B cell (primary cell): ENCODE measurements at regions of chrX and their contacts with region 1.

Region 1: DNA sequence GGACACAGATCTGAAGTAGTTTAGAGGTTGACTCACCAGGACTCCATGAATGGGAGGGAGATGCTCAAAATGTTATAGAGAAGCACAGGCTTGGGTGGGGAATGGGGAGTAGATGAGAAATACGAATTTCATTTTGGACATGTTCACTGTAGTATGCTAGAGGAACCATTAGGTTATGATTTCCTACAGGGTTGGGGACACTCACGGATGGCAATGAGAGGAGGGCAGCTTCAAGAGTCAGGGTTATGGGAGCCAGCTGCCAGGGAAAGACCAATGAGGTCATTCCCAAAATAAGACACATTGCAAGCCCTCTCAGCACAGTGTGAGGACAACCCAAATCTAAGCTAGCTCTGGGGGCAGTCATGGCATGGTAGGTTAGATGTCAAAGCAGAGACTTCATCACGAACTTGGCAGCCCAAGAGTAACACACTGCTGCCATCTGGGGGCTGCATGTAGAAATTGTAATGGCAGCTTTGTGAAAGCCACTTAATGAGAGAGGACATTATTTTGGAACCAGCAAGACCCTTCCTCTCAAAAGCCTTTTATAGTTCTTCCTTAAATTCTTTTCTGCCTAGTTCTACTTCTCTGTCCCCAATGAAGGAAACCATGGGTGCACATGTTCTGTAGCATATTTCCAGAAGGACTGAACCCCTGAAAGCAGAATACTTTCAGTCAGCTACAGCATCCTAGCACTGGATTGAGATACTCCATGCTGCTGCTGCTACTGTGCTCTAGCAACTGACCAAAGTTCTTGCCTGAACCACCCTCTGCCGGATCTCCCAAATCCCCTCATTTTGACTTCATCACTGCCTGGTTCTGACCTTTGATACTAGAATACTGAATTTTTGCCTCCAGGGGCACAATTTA is 16.2 kb upstream of the ZCCHC12 start:
- DNase-seq: peak; percentile 69
- ATAC-seq: peak; percentile 58
- H3K4me3 ChIP-seq: no peak overlapping the region
- H3K4me3 Mint-ChIP-seq: no peak overlapping the region
- H3K27ac ChIP-seq: no peak overlapping the region
- H3K27ac Mint-ChIP-seq: no peak overlapping the region
- H3K4me1 ChIP-seq: no peaks in the 10 kb centered on the region
- H3K4me1 Mint-ChIP-seq: peaks cover 4% of the 10 kb centered on the region
- H3K27me3 ChIP-seq: no peaks in the 10 kb centered on the region
- H3K27me3 Mint-ChIP-seq: peaks cover 3% of the 10 kb centered on the region
- CTCF ChIP-seq: peak; percentile 73

Region 2: DNA sequence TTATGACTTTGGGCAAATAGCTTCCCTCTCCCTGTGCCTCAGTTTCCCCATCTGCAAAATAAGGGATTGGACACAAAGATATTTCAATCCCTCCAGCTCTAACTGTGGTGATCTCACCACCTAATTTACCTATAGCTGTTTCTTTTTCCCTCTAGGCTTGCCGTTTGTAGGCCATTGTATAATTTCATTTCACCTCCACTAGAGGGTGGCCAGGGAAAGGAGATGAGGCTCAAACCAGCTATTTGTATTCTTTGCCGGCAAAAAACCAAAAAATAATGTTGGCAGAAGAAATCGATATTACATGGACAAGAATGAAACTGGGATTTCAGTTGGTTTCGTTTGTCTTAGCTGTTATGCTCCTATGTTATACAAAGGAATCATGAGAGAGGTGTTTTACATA is 347.9 kb before region 1 on chrX:
- CTCF ChIA-PET with region 1: interaction called, 7 read pairs
- POLR2A ChIA-PET with region 1: no interaction called
- intact Hi-C with region 1: loop called (anchors 5 kb)
- DNase-seq: peak; percentile 50
- ATAC-seq: no peak
- H3K4me3 ChIP-seq: no peak overlapping the region
- H3K4me3 Mint-ChIP-seq: no peak overlapping the region
- H3K27ac ChIP-seq: no peak overlapping the region
- H3K27ac Mint-ChIP-seq: no peak overlapping the region
- H3K4me1 ChIP-seq: no peaks in the 10 kb centered on the region
- H3K4me1 Mint-ChIP-seq: no peaks in the 10 kb centered on the region
- H3K27me3 ChIP-seq: no peaks in the 10 kb centered on the region
- H3K27me3 Mint-ChIP-seq: peaks cover 3% of the 10 kb centered on the region
- CTCF ChIP-seq: peak; percentile 64

Region 3: GRCh38 chrX:118603981-118604380 is 203.4 kb before region 1 on chrX:
- CTCF ChIA-PET with region 1: interaction called, 53 read pairs
- POLR2A ChIA-PET with region 1: no interaction called
- intact Hi-C with region 1: loop called (anchors 1 kb)
- DNase-seq: peak; percentile 61
- ATAC-seq: peak; percentile 51
- H3K4me3 ChIP-seq: no peak overlapping the region
- H3K4me3 Mint-ChIP-seq: no peak overlapping the region
- H3K27ac ChIP-seq: no peak overlapping the region
- H3K27ac Mint-ChIP-seq: peak overlapping the region; percentile 75
- H3K4me1 ChIP-seq: no peaks in the 10 kb centered on the region
- H3K4me1 Mint-ChIP-seq: peaks cover 4% of the 10 kb centered on the region
- H3K27me3 ChIP-seq: no peaks in the 10 kb centered on the region
- H3K27me3 Mint-ChIP-seq: no peaks in the 10 kb centered on the region
- CTCF ChIP-seq: peak; percentile 75

Region 4: DNA sequence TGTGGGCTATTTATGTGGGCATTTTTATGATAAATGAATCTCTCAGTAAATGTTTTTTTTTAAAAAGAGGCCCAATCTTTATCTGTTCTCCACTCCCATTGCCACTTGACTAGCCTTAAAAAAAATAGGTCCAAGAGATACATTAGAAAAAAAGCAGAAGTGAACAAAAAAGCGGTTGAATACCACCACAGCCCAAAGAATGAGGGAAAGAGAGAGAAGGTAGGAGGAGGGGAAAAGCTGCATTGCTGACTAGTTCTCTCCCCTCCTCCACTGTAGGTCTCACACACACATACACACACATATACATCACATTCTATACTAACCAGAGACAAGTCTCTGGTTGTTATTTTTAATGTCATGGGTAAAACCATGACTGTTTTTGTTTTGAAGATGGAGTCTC is 175.8 kb before region 1 on chrX:
- CTCF ChIA-PET with region 1: interaction called, 15 read pairs
- POLR2A ChIA-PET with region 1: interaction called, 3 read pairs
- intact Hi-C with region 1: loop called (anchors 5 kb)
- DNase-seq: peak; percentile 60
- ATAC-seq: peak; percentile 70
- H3K4me3 ChIP-seq: no peak overlapping the region
- H3K4me3 Mint-ChIP-seq: no peak overlapping the region
- H3K27ac ChIP-seq: peak overlapping the region in 1 of 2 donors; percentile 34
- H3K27ac Mint-ChIP-seq: peak overlapping the region; percentile 82
- H3K4me1 ChIP-seq: peaks cover 16 to 17% of the 10 kb centered on the region in 2 donors
- H3K4me1 Mint-ChIP-seq: peaks cover 29% of the 10 kb centered on the region
- H3K27me3 ChIP-seq: no peaks in the 10 kb centered on the region
- H3K27me3 Mint-ChIP-seq: no peaks in the 10 kb centered on the region
- CTCF ChIP-seq: no peak

Region 5: DNA sequence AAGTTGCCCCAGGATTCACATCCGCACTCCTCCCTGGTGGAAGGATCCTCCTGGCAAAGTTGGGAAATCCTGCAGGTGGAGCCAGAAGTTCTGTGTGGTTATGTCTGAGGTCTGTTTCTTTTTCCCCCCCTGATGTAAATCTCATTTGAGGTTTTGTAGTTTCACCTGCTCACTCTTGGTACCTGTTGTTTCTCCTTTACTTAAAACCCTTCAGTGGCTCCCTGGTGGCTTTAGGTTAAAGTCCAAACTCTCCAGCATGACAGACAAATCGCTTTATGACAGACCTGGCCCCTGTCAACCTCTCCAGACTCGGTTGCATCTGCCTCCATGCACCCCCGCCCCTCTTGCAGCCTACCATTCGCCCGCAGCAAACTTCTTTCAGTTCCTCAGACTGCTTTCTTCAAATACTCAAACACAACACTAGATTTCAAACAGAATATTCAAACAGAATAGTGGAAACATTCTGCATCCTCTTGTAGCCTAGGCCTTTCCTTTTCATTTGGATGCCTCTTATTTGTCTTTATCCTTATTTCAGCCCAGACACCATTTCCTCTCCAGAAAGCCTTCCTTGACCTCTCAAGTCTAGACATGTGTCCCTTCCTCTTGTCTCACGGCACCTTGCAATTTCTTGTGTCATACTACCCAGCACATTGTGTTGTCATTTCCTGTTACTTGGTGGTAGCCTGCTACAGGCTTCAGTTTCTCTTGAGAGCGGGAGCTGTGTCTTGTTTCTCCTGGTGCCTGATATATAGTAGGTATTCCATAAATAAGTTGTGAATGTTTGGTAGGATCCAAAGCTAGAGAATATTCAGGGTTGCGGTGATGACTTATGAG is 55.2 kb before region 1 on chrX:
- CTCF ChIA-PET with region 1: interaction called, 5 read pairs
- POLR2A ChIA-PET with region 1: no interaction called
- intact Hi-C with region 1: loop called (anchors 10 kb)
- DNase-seq: peak; percentile 70
- ATAC-seq: peak; percentile 80
- H3K4me3 ChIP-seq: peak overlapping the region in 2 of 5 experiments; percentile 5 to 22
- H3K4me3 Mint-ChIP-seq: peak overlapping the region; percentile 70
- H3K27ac ChIP-seq: peak overlapping the region; percentile 68 to 87
- H3K27ac Mint-ChIP-seq: peak overlapping the region; percentile 92
- H3K4me1 ChIP-seq: peaks cover 22 to 24% of the 10 kb centered on the region in 2 donors
- H3K4me1 Mint-ChIP-seq: peaks cover 27% of the 10 kb centered on the region
- H3K27me3 ChIP-seq: no peaks in the 10 kb centered on the region
- H3K27me3 Mint-ChIP-seq: no peaks in the 10 kb centered on the region
- CTCF ChIP-seq: no peak

Region 6: GRCh38 chrX:118893923-118894322 is 86.5 kb after region 1 on chrX:
- CTCF ChIA-PET with region 1: no interaction called
- POLR2A ChIA-PET with region 1: no interaction called
- intact Hi-C with region 1: no loop called
- DNase-seq: no peak
- ATAC-seq: no peak
- H3K4me3 ChIP-seq: no peak overlapping the region
- H3K4me3 Mint-ChIP-seq: no peak overlapping the region
- H3K27ac ChIP-seq: no peak overlapping the region
- H3K27ac Mint-ChIP-seq: no peak overlapping the region
- H3K4me1 ChIP-seq: no peaks in the 10 kb centered on the region
- H3K4me1 Mint-ChIP-seq: peaks cover 5% of the 10 kb centered on the region
- H3K27me3 ChIP-seq: no peaks in the 10 kb centered on the region
- H3K27me3 Mint-ChIP-seq: no peaks in the 10 kb centered on the region
- CTCF ChIP-seq: no peak

Region 7: DNA sequence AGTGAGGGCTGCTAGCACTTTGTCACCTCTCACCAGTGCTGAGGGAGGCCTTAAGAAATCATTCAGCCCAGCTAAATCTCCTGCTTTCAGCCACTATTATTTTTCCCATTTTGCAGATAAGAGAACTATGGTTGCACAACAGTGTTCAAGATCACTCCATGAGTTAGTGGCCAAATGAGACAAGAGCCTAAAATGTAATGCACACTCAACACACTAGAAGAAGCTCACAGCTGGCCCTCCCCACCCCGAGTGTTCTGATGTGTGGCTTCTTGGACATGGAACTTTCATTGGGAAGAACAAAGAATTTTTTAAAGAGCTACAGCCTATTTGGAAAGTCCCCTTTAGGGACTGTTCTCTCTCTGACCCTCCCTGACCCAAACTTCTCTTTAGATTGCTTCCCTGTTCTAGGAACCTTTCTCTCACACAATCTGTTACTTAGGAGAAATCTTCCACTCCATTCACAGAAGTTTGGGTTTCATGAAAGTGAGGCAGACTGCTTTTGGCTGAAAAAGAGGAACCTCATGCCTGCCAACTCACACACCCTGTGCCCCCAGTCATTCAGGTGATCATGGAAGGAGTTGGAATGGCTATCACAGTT is 221.4 kb after region 1 on chrX:
- CTCF ChIA-PET with region 1: no interaction called
- POLR2A ChIA-PET with region 1: no interaction called
- intact Hi-C with region 1: no loop called
- DNase-seq: no peak
- ATAC-seq: no peak
- H3K4me3 ChIP-seq: no peak overlapping the region
- H3K4me3 Mint-ChIP-seq: no peak overlapping the region
- H3K27ac ChIP-seq: no peak overlapping the region
- H3K27ac Mint-ChIP-seq: no peak overlapping the region
- H3K4me1 ChIP-seq: no peaks in the 10 kb centered on the region
- H3K4me1 Mint-ChIP-seq: no peaks in the 10 kb centered on the region
- H3K27me3 ChIP-seq: no peaks in the 10 kb centered on the region
- H3K27me3 Mint-ChIP-seq: peaks cover 7% of the 10 kb centered on the region
- CTCF ChIP-seq: no peak